Calu3 (cell line): ENCODE measurements at regions of chr11 and their contacts with region 1.

Region 1: GRCh38 chr11:13249996-13250395 is 27.6 kb upstream of the BMAL1 start:
- DNase-seq: no peak
- H3K4me3 Mint-ChIP-seq: no peak overlapping the region
- H3K27ac Mint-ChIP-seq: no peak overlapping the region
- H3K4me1 Mint-ChIP-seq: no peaks in the 10 kb centered on the region
- H3K27me3 Mint-ChIP-seq: peaks cover 29% of the 10 kb centered on the region
- CTCF ChIP-seq: no peak

Region 2: DNA sequence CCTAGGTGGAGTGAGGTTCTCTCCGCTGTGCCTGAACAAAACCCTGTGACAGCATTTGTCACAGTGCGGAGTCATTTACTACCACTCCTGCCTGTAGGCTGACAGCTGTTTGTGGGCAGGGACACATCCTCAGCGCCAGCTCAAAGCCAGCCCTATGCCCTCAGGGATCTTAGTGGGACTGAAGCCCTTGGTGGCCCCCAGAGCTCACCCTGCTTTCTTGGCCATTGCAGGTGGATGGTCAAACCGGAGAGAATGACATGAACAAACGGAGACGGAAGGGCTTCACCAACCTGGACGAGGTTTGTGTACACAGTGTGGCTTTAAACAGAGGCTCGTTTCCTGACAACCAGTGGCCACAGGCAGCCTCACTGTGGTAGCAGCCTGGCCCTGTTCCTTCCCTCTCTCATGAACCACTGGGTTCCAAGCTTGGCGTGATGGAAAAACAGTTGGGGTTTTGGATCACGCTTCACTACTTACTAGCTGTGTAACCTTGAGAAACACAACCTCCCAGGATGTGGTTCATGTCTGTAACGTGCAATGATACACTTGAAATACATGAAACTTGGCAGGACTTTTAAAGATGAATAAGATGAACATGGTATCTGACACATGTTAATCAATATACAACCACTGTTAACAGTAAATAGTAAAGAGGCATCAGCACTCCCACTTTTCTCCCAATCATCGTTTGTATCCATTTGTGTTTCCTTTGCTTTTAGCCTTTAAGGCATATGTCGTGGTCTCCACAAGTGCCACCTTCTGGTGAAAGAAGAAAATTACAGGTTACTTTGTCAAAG is 1013.9 kb before region 1 on chr11:
- CTCF ChIA-PET with region 1: no interaction called
- intact Hi-C with region 1: no loop called
- DNase-seq: no peak
- H3K4me3 Mint-ChIP-seq: no peak overlapping the region
- H3K27ac Mint-ChIP-seq: no peak overlapping the region
- H3K4me1 Mint-ChIP-seq: peaks cover 7% of the 10 kb centered on the region
- H3K27me3 Mint-ChIP-seq: no peaks in the 10 kb centered on the region
- CTCF ChIP-seq: peak; percentile 55

Region 3: GRCh38 chr11:13269775-13270174 is 19.8 kb after region 1 on chr11:
- CTCF ChIA-PET with region 1: no interaction called
- intact Hi-C with region 1: loop called (anchors 2 kb)
- DNase-seq: no peak
- H3K4me3 Mint-ChIP-seq: no peak overlapping the region
- H3K27ac Mint-ChIP-seq: no peak overlapping the region
- H3K4me1 Mint-ChIP-seq: peaks cover 9% of the 10 kb centered on the region
- H3K27me3 Mint-ChIP-seq: peaks cover 63% of the 10 kb centered on the region
- CTCF ChIP-seq: no peak

Region 4: GRCh38 chr11:13343931-13344717 is 94.1 kb after region 1 on chr11:
- CTCF ChIA-PET with region 1: interaction called, 4 read pairs
- intact Hi-C with region 1: loop called (anchors 1 kb)
- DNase-seq: peak; percentile 75
- H3K4me3 Mint-ChIP-seq: no peak overlapping the region
- H3K27ac Mint-ChIP-seq: no peak overlapping the region
- H3K4me1 Mint-ChIP-seq: peaks cover 26% of the 10 kb centered on the region
- H3K27me3 Mint-ChIP-seq: no peaks in the 10 kb centered on the region
- CTCF ChIP-seq: peak; percentile 80